Esophagus muscularis mucosa (tissue), 4 donors: ENCODE measurements at regions of chr2 and their contacts with region 1.

Region 1: DNA sequence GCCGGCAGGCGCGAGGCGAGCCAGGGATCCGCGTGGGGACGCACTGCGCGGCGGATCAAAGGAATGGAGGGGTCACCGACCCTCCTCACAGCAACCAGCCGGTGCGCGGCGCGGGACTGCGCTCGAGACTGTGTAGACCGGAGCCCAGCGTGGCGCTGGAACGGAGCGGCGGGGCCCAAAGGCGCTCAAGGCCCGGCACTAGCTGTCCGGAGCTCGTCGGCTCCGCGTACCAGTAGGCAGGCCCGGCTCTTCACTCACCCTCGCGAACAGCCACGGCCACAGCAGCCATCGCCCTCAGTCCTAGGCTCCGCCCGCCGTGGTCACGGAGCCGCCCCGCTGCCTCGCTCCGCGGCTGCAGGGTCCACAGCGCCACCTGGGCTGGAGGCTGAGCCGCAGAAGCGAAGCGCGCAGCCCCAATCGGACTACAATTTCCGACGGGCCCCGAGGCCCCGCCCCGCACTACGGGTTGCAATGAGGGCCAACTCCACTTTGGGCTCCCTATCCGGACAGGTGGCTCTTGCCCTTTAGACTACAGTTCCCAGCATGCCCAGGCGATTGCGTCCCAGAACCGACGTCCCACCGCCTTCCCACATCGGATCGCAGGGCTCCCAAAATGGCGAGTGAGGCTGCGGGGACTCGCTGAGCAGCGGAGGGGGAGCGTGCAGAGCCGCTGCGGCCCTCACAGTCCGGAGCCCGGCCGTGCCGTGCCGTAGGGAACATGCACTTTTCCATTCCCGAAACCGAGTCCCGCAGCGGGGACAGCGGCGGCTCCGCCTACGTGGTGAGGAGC is at the starts of genes EIF2B4 and SNX17:
- DNase-seq: peak; percentile 100
- H3K4me3 ChIP-seq: peak within 1 kb of the TSS; percentile 86 to 94 (median 89)
- H3K27ac ChIP-seq: peak within 1 kb of the TSS; percentile 88 to 99 (median 95)
- H3K4me1 ChIP-seq: peaks cover 28 to 46% (median 38%) of the 10 kb centered on the region in 4 donors
- H3K27me3 ChIP-seq: no peaks in the 10 kb centered on the region
- CTCF ChIP-seq: peak; percentile 69 to 81 (median 73)
- EP300 ChIP-seq: no peak
- POLR2A ChIP-seq: peak; percentile 34
- total RNA-seq, gene EIF2B4: 39.0 to 50.1 (median 44.9) TPM
- total RNA-seq, gene SNX17: 84.7 to 151 (median 124) TPM

Region 2: DNA sequence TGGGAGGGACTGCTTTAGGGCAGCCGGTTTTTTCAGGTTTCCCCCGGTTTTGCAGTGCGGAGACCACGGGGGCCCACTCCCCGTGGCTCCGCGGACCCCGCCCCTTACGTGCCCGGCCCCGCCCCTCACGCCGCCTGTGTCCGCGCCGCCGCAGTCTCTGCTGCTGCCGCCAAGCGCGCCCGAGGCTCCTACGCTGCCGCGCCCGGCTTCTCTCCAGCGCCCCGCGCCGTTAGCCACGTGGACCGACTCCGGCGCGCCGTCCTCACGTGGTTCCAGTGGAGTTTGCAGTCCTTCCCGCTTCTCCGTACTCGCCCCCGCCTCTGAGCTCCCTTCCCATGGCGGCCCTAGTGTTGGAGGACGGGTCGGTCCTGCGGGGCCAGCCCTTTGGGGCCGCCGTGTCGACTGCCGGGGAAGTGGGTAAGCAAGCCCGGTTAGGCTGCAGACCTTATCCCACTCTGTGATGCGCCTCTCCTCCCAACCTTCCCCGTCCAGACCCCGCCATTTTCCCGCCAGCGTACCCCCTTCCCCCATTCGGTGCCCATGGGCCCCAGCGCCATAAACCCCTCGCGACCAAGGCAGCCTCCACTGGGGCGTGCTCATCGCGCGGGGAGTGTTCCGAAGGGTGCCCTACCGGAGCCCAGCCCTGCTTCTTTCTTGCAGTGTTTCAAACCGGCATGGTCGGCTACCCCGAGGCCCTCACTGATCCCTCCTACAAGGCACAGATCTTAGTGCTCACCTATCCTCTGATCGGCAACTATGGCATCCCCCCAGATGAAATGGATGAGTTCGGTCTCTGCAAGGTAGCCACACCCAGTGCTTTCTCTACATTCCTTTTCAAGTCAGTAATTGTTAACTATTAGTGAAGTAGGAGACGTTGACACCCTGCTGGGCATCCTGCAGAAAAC is 152.8 kb before region 1 on chr2 and contains the start of gene CAD:
- intact Hi-C with region 1: loop called (anchors 10 kb)
- DNase-seq: peak; percentile 94
- H3K4me3 ChIP-seq: peak within 1 kb of the TSS; percentile 55 to 72 (median 72)
- H3K27ac ChIP-seq: peak within 1 kb of the TSS; percentile 70 to 77 (median 72)
- H3K4me1 ChIP-seq: peaks cover 25 to 42% (median 29%) of the 10 kb centered on the region in 4 donors
- H3K27me3 ChIP-seq: no peaks in the 10 kb centered on the region
- CTCF ChIP-seq: peak; percentile 19 to 40 (median 37)
- EP300 ChIP-seq: no peak
- POLR2A ChIP-seq: no peak
- total RNA-seq, gene CAD: 12.4 to 28.3 (median 16.6) TPM

Region 3: GRCh38 chr2:27281855-27282559 is 88.2 kb before region 1 on chr2 and contains the start of gene TRIM54:
- intact Hi-C with region 1: no loop called
- DNase-seq: no peak
- H3K4me3 ChIP-seq: no peak within 1 kb of the TSS
- H3K27ac ChIP-seq: no peak within 1 kb of the TSS
- H3K4me1 ChIP-seq: peaks cover 0 to 17% (median 4%) of the 10 kb centered on the region in 4 donors
- H3K27me3 ChIP-seq: peaks cover 0 to 35% (median 3%) of the 10 kb centered on the region in 4 donors
- CTCF ChIP-seq: no peak
- EP300 ChIP-seq: no peak
- POLR2A ChIP-seq: no peak
- total RNA-seq, gene TRIM54: 0.32 TPM in 1 of 4 donors, not detected in the others

Region 4: GRCh38 chr2:27322766-27323595 is 47.2 kb before region 1 on chr2 and contains the start of gene MPV17:
- intact Hi-C with region 1: loop called (anchors 5 kb)
- DNase-seq: peak; percentile 98
- H3K4me3 ChIP-seq: peak within 1 kb of the TSS; percentile 78 to 95 (median 84)
- H3K27ac ChIP-seq: peak within 1 kb of the TSS; percentile 93 to 98 (median 95)
- H3K4me1 ChIP-seq: peaks cover 29 to 34% (median 31%) of the 10 kb centered on the region in 4 donors
- H3K27me3 ChIP-seq: no peaks in the 10 kb centered on the region
- CTCF ChIP-seq: no peak
- EP300 ChIP-seq: no peak
- POLR2A ChIP-seq: peak; percentile 71
- total RNA-seq, gene MPV17: 46.7 to 70.2 (median 60.6) TPM

Region 5: GRCh38 chr2:27409321-27410073 is 39.3 kb after region 1 on chr2 and contains the start of gene PPM1G:
- intact Hi-C with region 1: loop called (anchors 5 kb)
- DNase-seq: peak; percentile 96
- H3K4me3 ChIP-seq: peak within 1 kb of the TSS; percentile 71 to 100 (median 91)
- H3K27ac ChIP-seq: peak within 1 kb of the TSS; percentile 84 to 91 (median 87)
- H3K4me1 ChIP-seq: peaks cover 24 to 35% (median 29%) of the 10 kb centered on the region in 4 donors
- H3K27me3 ChIP-seq: no peaks in the 10 kb centered on the region
- CTCF ChIP-seq: peak in 1 of 3 experiments; percentile 4
- EP300 ChIP-seq: no peak
- POLR2A ChIP-seq: no peak
- total RNA-seq, gene PPM1G: 46.1 to 71.8 (median 62.7) TPM

Region 6: GRCh38 chr2:27627963-27628766 is 257.9 kb after region 1 on chr2:
- intact Hi-C with region 1: no loop called
- DNase-seq: no peak
- H3K4me3 ChIP-seq: peak overlapping the region; percentile 67 to 83 (median 76)
- H3K27ac ChIP-seq: peak overlapping the region; percentile 70 to 78 (median 73)
- H3K4me1 ChIP-seq: peaks cover 21 to 32% (median 29%) of the 10 kb centered on the region in 4 donors
- H3K27me3 ChIP-seq: no peaks in the 10 kb centered on the region
- CTCF ChIP-seq: no peak
- EP300 ChIP-seq: no peak
- POLR2A ChIP-seq: no peak